BJ (cell line): ENCODE measurements at regions of chr5 and their contacts with region 1.

Region 1: GRCh38 chr5:157328277-157328912 is 62.5 kb downstream of the CYFIP2 start:
- DNase-seq: peak; percentile 12
- H3K4me3 ChIP-seq: peak overlapping the region; percentile 20; the same call in 1 of the 2 replicates
- H3K27me3 ChIP-seq: no peaks in the 10 kb centered on the region
- CTCF ChIP-seq: peak; percentile 93

Region 2: DNA sequence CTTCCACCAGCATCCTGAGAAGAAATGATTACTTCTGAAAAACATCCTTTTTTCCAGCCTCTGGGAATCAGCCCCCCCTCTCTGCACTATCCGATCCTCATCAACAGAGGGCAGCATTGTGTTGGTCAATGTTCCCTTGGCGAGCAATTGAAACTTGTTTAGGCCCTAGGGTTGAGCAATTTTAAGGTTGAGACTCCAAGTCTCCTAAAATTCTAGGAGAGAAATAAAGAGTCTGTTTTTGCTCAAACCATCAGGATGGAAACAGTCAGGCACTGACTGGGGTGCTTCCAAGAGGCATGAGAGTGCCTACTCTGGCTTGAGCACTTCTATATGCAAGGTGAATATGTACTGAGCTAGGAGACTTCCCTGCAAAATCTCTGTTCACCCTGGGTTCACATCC is 74.8 kb before region 1 on chr5:
- CTCF ChIA-PET with region 1: interaction called, 18 read pairs
- POLR2A ChIA-PET with region 1: no interaction called
- DNase-seq: peak; percentile 5
- H3K4me3 ChIP-seq: no peak overlapping the region
- H3K27me3 ChIP-seq: peaks cover 6% of the 10 kb centered on the region; the same call in 1 of the 2 replicates
- CTCF ChIP-seq: peak; percentile 93

Region 3: DNA sequence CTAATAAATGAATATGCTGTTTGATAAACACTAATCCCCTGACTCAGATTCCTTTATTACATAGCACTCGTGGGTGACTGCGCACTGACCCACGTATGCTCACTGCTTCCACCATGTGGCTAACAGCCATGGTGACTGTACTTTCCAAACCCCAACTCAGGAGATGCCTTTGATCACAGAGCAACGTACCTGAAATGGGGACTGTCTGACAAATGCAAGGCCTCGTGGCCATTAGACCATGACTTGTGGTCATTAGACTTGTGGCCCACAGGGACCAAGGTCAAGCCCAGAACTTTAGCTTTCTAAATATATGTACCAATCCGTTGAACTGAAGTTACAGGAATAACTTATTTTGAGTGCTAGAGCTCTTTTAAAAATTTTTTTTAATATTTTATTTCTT is 15.9 kb before region 1 on chr5:
- CTCF ChIA-PET with region 1: interaction called, 11 read pairs
- POLR2A ChIA-PET with region 1: interaction called, 3 read pairs
- DNase-seq: no peak
- H3K4me3 ChIP-seq: no peak overlapping the region
- H3K27me3 ChIP-seq: no peaks in the 10 kb centered on the region
- CTCF ChIP-seq: peak; percentile 82

Region 4: DNA sequence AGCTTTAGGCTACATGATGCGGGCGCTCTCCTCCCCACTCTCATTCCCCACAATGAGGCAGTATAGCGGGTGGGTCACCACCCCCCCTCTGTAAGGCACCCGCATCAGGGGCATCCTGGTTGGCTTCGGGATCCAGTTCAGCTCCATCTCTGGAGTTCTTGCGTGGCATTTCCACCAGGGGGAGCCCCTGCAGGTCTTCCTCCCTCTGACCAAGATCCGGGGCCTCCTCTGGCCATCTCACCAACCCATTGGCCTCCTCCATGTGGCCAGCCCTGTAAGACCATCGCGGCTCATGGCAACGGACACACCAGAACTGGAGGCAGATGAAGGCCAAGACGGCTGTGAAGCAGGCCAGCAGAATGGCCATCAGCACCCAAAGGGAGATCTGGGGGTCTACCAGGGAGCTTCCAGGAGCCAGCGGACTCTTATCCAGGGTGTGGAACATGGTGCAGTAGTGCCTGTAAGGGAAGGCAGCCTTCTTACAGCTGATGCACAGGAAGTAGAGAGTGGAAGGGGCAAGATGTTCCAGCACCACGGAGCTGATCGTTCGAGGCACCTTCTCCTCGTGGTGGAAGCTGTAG is 14.5 kb after region 1 on chr5:
- CTCF ChIA-PET with region 1: interaction called, 29 read pairs
- POLR2A ChIA-PET with region 1: no interaction called
- DNase-seq: no peak
- H3K4me3 ChIP-seq: no peak overlapping the region
- H3K27me3 ChIP-seq: no peaks in the 10 kb centered on the region
- CTCF ChIP-seq: peak; percentile 56

Region 5: GRCh38 chr5:157471709-157472108 is 143.3 kb after region 1 on chr5:
- CTCF ChIA-PET with region 1: interaction called, 24 read pairs
- POLR2A ChIA-PET with region 1: no interaction called
- DNase-seq: no peak
- H3K4me3 ChIP-seq: no peak overlapping the region
- H3K27me3 ChIP-seq: no peaks in the 10 kb centered on the region
- CTCF ChIP-seq: peak; percentile 62

Region 6: DNA sequence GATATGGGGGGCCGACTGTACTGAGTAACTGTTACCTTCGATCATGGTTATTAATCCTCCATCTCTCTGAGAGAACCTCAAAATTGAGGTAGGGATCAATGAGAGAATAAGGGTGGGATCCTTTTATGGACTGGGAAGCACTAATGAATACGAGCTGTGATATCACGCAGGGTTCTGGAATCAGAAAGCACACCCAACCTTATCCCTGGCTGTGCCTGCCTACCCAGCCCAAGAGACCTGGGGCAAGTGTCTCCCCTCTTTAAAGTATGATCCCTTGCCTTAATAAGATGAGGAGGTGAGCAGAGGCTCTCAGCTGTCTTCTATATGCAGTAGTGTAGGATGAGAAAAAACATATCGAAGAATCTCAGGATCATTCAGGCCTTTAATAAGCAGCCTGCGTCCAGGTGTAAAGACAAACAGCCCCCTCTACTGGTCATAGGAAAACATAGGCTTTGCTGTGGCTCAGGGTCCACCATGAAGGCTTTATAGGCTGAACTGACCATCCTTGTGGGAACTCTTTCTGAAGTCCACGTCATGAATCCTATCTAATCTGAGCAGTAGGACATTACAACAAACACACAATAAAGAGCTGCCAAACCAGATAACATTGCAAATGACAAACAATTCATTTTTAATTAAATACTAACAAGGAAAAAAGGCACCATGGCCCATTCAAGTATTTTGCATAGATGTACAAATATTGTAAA is 148.5 kb after region 1 on chr5:
- CTCF ChIA-PET with region 1: interaction called, 24 read pairs
- POLR2A ChIA-PET with region 1: no interaction called
- DNase-seq: peak; percentile 11
- H3K4me3 ChIP-seq: no peak overlapping the region
- H3K27me3 ChIP-seq: no peaks in the 10 kb centered on the region
- CTCF ChIP-seq: peak; percentile 85

Region 7: DNA sequence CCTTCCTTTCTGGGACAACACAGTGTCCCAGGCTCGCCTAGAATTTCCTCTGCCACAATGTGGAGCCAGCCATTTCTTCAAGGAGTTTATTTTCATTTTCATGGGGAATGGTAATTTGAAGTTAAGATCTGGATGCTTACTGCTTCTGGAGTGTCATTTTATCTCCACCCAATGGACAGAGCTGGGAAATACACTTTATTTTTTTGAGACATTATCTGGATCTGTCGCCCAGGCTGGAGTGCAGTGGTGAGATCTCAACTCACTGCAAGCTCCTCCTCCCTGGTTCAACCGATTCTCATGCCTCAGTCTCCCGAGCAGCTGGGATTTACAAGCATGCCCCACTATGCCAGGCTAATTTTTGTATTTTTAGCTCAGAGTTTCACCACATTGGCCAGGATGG is 390.1 kb after region 1 on chr5:
- CTCF ChIA-PET with region 1: interaction called, 14 read pairs
- POLR2A ChIA-PET with region 1: no interaction called
- DNase-seq: peak; percentile 47
- H3K4me3 ChIP-seq: no peak overlapping the region
- H3K27me3 ChIP-seq: no peaks in the 10 kb centered on the region
- CTCF ChIP-seq: peak; percentile 62